ENCODE measurements at regions of chr11 and their contacts with region 1.

Region 1: DNA sequence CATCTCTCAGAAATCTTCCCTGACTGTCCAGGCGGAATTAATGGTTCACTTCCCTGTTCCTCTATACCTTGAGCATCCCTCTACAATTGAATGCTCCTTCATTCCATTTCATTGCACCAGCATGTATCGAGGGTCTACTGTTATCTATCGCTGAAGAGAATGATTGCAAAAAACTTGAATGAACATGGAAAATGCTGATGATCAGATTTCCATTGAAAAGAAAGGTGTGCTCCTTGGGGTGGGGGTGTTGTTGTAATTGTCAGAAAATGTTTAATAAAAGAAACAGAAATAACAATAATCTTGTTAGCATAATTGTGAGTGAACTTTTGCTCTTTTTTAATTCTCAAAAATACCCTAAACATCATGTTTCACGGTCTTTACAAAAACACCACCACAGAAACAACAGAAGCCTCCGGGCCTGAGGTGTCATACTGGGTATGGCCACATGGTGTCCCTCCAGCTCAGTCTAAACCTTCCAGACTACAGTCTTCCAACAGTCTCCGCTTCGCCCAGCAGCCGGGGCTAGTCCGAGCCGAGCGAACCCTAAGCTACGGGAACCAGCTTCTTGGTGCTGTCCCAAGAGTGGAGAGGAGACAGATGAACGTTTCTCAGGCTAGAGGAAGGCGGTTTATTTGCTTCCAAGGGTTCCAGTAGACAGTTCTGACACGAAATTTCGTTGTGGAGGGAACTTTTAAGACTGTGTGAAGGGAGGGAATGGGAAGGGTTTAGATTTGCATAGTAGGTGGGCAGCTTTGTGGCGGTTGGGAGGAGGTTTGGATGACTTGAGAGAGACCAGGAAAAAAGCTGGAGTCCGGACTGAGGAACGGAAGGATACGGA is 75.8 kb upstream of the ZBED5 start:
- DNase-seq: peak; percentile 91
- H3K4me3 Mint-ChIP-seq: peak overlapping the region; percentile 76
- H3K27ac Mint-ChIP-seq: peak overlapping the region; percentile 68
- H3K4me1 Mint-ChIP-seq: peaks cover 35% of the 10 kb centered on the region
- H3K27me3 Mint-ChIP-seq: no peaks in the 10 kb centered on the region
- CTCF ChIP-seq: peak; percentile 88

Region 2: GRCh38 chr11:10792398-10792975 is 141.2 kb before region 1 on chr11:
- CTCF ChIA-PET with region 1: interaction called, 27 read pairs
- intact Hi-C with region 1: loop called (anchors 5 kb)
- DNase-seq: peak; percentile 96
- H3K4me3 Mint-ChIP-seq: peak overlapping the region; percentile 12
- H3K27ac Mint-ChIP-seq: no peak overlapping the region
- H3K4me1 Mint-ChIP-seq: peaks cover 34% of the 10 kb centered on the region
- H3K27me3 Mint-ChIP-seq: no peaks in the 10 kb centered on the region
- CTCF ChIP-seq: peak; percentile 89

Region 3: GRCh38 chr11:10857709-10858438 is 75.8 kb before region 1 on chr11 and contains the start of gene ZBED5:
- CTCF ChIA-PET with region 1: interaction called, 8 read pairs
- intact Hi-C with region 1: loop called (anchors 5 kb)
- DNase-seq: peak; percentile 95
- H3K4me3 Mint-ChIP-seq: peak within 1 kb of the TSS; percentile 96
- H3K27ac Mint-ChIP-seq: peak within 1 kb of the TSS; percentile 89
- H3K4me1 Mint-ChIP-seq: peaks cover 17% of the 10 kb centered on the region
- H3K27me3 Mint-ChIP-seq: no peaks in the 10 kb centered on the region
- CTCF ChIP-seq: no peak
- total RNA-seq, gene ZBED5: 49.8 and 51.4 TPM in 2 replicates

Region 4: DNA sequence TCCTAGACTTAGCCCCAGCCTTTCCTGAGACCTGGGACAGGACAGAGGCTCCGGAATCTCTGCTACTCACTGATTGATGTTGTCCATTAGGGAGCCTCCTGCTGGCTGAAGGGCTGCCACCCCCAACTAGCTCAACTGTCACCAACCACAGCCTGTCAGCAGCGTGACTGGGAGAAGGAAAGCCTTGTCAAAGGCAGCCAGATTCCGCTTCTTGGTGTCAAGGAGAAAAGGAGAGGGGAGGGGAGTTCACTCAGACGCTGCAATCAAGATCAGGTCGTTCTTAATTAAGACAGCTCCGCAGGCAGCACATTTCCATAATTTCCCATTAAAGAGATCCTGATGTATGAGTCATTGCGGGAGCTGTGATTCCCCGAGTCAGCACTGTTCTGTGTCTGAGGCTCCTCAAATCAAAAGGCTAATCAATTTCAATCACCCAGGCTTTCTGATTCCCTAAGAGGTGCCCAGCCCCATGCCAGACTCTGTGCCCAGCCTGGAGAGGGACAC is 77.0 kb after region 1 on chr11:
- CTCF ChIA-PET with region 1: interaction called, 77 read pairs
- intact Hi-C with region 1: no loop called
- DNase-seq: peak; percentile 60
- H3K4me3 Mint-ChIP-seq: peak overlapping the region; percentile 50
- H3K27ac Mint-ChIP-seq: no peak overlapping the region
- H3K4me1 Mint-ChIP-seq: peaks cover 14% of the 10 kb centered on the region
- H3K27me3 Mint-ChIP-seq: peaks cover 32% of the 10 kb centered on the region
- CTCF ChIP-seq: peak; percentile 49

Region 5: DNA sequence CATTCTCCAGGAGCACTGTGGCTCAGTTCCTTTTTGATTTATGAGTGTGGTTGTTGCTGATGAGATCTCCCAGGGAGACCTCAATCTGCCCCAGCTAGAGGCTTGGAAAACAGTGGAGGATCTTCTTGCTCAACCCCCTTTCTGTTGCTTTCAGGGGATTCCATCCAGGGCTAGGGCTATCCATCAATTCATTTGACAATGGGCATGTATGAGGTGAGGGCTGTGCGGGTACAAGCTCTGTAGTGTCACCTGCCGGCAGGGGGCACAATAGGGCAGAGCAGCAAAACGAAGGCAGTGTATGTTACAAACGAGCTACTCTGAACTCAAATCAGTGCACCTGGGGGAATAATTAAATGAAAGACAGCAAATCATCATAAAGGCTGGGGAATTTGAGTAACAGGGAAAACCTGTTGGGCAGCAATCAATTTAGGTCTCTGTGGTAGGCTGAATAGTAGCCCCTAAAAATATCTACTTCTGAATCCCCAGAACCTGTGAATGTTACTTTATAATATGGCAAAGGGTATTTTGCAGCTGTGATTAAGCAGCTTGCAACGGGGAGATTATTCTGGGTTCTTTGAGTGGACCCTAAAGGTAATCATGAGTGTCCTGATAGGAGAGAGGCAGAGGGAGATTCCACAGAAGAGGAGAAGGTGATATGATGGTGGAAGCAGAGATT is 94.5 kb after region 1 on chr11:
- CTCF ChIA-PET with region 1: interaction called, 30 read pairs
- intact Hi-C with region 1: no loop called
- DNase-seq: peak; percentile 87
- H3K4me3 Mint-ChIP-seq: no peak overlapping the region
- H3K27ac Mint-ChIP-seq: no peak overlapping the region
- H3K4me1 Mint-ChIP-seq: no peaks in the 10 kb centered on the region
- H3K27me3 Mint-ChIP-seq: peaks cover 43% of the 10 kb centered on the region
- CTCF ChIP-seq: peak; percentile 66